ENCODE measurements at regions of chr17 and their contacts with region 1.

Region 1: GRCh38 chr17:42399948-42400843 is 12.0 kb upstream of the STAT3 start:
- H3K4me3 ChIP-seq: no peak overlapping the region
- H3K27ac ChIP-seq: no peak overlapping the region
- H3K4me1 ChIP-seq: no peaks in the 10 kb centered on the region
- CTCF ChIP-seq: no peak

Region 2: GRCh38 chr17:42388381-42389134 is 11.6 kb before region 1 on chr17 and contains the start of gene STAT3:
- CTCF ChIA-PET with region 1: interaction called, 23 read pairs
- POLR2A ChIA-PET with region 1: interaction called, 15 read pairs
- H3K4me3 ChIP-seq: peak within 1 kb of the TSS; percentile 95
- H3K27ac ChIP-seq: peak within 1 kb of the TSS; percentile 73
- H3K4me1 ChIP-seq: peaks cover 8% of the 10 kb centered on the region
- CTCF ChIP-seq: 0 out of 2 replicates have a peak, but pooled peaks have one; percentile 57